Panc1 (cell line): ENCODE measurements at regions of chr7 and their contacts with region 1.

Region 1: DNA sequence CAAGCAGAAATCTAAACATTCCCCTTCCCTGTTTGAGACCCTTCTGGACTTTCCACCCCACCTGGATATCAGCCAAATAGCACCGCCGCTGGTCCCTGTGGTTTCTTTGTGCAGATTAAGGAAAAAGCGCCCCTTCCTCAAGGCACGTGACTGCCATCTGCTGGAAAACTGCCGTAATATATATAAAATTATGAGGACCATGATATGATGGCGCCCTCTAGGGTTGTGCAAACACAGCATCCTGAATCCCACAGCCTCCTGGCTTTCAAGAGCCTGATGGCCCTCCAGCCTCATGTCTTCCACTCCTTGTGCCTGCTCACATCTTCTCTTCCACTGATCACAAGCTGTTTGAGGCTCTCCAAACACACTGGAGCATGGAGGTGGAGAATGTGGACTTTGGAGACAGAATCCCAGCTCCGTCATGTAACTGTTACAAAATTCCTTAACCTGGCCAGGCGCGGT is 121.3 kb downstream of the MYL10 start:
- DNase-seq: peak; percentile 47
- ATAC-seq: peak; percentile 69
- H3K4me3 ChIP-seq: no peak overlapping the region
- H3K27ac ChIP-seq: peak overlapping the region; percentile 51; the same call in 1 of the 2 replicates
- H3K4me1 ChIP-seq: peaks cover 6% of the 10 kb centered on the region
- H3K27me3 ChIP-seq: no peaks in the 10 kb centered on the region
- CTCF ChIP-seq: peak; percentile 96

Region 2: GRCh38 chr7:101457007-101457755 is 50.6 kb before region 1 on chr7:
- CTCF ChIA-PET with region 1: no interaction called
- POLR2A ChIA-PET with region 1: no interaction called
- in situ Hi-C with region 1: no loop called
- intact Hi-C with region 1: loop called (anchors 5 kb)
- DNase-seq: no peak
- ATAC-seq: no peak
- H3K4me3 ChIP-seq: no peak overlapping the region
- H3K27ac ChIP-seq: peak overlapping the region; percentile 53; the same call in 1 of the 2 replicates
- H3K4me1 ChIP-seq: peaks cover 9% of the 10 kb centered on the region
- H3K27me3 ChIP-seq: no peaks in the 10 kb centered on the region
- CTCF ChIP-seq: no peak

Region 3: GRCh38 chr7:101494602-101495329 is 13.1 kb before region 1 on chr7:
- CTCF ChIA-PET with region 1: no interaction called
- POLR2A ChIA-PET with region 1: no interaction called
- in situ Hi-C with region 1: no loop called
- intact Hi-C with region 1: no loop called
- DNase-seq: no peak
- ATAC-seq: peak; percentile 52
- H3K4me3 ChIP-seq: no peak overlapping the region
- H3K27ac ChIP-seq: peak overlapping the region; percentile 53
- H3K4me1 ChIP-seq: peaks cover 20% of the 10 kb centered on the region
- H3K27me3 ChIP-seq: no peaks in the 10 kb centered on the region
- CTCF ChIP-seq: no peak

Region 4: DNA sequence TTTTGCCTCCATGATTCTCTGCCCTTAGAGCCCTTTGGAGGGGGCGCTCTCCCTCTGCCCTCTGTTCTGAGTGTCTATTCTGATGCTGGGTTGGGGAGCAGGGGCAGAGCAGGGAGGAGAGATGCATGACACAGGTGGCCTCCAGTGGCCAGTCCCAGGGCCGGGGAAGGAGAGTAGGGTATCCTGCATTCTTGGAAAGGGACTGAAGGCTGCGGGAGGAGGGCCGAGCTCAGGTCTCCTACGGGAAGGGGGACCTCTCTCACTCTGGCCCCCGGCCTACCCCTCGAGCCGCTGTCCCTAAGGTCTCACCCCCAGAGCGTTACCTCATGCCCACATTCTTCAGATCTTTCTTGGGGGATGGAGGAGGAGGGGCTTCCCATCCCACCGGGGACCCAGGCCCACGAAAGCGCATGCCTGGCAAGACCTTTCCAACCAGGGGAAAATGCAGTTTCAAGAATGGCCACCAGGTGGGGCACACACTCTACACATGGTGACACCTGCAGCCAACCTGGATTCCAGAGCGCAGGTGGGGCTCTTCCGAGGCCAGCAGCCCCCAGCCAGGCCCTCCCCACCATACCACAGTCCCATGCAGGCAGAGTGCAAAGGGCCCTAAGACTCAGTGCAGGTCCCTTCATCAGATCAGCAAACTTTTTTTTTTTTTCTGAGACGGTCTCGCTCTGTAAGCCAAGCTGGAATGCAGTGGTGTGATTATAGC is 34.9 kb after region 1 on chr7:
- CTCF ChIA-PET with region 1: no interaction called
- POLR2A ChIA-PET with region 1: no interaction called
- in situ Hi-C with region 1: no loop called
- intact Hi-C with region 1: no loop called
- DNase-seq: peak; percentile 48
- ATAC-seq: peak; percentile 70
- H3K4me3 ChIP-seq: peak overlapping the region in 1 of 2 experiments; percentile 19; a peak in 1 of 4 replicates
- H3K27ac ChIP-seq: no peak overlapping the region
- H3K4me1 ChIP-seq: peaks cover 13% of the 10 kb centered on the region
- H3K27me3 ChIP-seq: no peaks in the 10 kb centered on the region
- CTCF ChIP-seq: peak; percentile 94

Region 5: GRCh38 chr7:102044984-102045673 is 537.3 kb after region 1 on chr7:
- CTCF ChIA-PET with region 1: no interaction called
- POLR2A ChIA-PET with region 1: no interaction called
- in situ Hi-C with region 1: no loop called
- intact Hi-C with region 1: no loop called
- DNase-seq: no peak
- ATAC-seq: no peak
- H3K4me3 ChIP-seq: no peak overlapping the region; a peak in 1 of 4 replicates
- H3K27ac ChIP-seq: no peak overlapping the region
- H3K4me1 ChIP-seq: no peaks in the 10 kb centered on the region
- H3K27me3 ChIP-seq: no peaks in the 10 kb centered on the region
- CTCF ChIP-seq: no peak